GM12878 (cell line): ENCODE measurements at regions of chr21 and their contacts with region 1.

Region 1: GRCh38 chr21:44792702-44793591 is 8.7 kb downstream of the UBE2G2 start:
- DNase-seq: no peak
- ATAC-seq: peak; percentile 94
- H3K4me3 ChIP-seq: no peak overlapping the region; the same call in 1 of the 2 replicates
- H3K27ac ChIP-seq: peak overlapping the region; percentile 30; the same call in 1 of the 2 replicates
- H3K4me1 ChIP-seq: peaks cover 19% of the 10 kb centered on the region
- H3K27me3 ChIP-seq: no peaks in the 10 kb centered on the region
- CTCF ChIP-seq: peak; percentile 66 to 77 (median 68)
- EP300 ChIP-seq: no peak
- POLR2A ChIP-seq: no peak
- RAD21 ChIP-seq: peak; percentile 82

Region 2: DNA sequence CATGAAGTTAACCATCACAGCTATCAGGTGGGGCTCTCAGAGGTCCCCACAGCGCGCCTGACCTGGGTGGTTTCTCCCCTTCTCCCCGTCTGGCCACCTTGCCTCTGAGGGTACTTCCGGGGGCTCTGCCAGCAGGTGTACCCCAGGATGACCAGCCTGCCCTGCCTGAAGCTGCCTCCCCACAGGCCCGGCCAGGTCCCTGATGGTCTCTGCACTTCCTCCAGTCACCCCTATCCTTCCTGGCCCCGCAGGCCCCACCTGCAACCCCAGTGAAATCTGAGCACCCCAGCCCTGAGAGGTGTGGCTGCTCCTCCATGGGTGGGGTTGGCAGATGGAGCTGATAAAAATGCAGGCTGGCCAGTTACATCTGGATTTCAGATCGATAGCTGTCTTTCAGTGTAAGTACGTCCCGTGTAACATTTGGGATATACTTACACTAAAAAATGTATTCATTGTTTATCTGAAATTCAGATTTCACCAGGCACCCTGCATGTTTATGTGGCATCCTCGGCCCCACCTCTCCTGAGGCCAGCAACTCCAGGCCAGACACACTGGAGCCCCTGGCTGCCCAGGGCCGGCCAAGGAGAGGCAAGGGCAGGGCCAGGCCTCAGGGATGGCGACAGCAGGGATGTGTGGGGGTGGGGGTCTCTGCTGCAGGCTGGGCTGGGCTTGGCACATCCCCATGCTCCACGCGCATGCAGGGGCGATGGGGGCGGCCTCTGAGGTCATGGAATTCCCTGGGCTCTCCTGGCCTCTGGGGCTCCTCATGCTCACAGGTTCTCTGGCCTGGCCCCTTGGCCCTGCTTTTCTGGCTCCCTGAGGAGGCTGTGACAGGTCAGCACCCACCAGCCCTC is 312.5 kb before region 1 on chr21:
- CTCF ChIA-PET with region 1: interaction called, 14 read pairs
- POLR2A ChIA-PET with region 1: no interaction called
- RAD21 ChIA-PET with region 1: interaction called, 3 read pairs
- SMC1A ChIA-PET with region 1: interaction called, 3 read pairs
- in situ Hi-C with region 1: no loop called
- intact Hi-C with region 1: no loop called
- DNase-seq: no peak
- ATAC-seq: no peak
- H3K4me3 ChIP-seq: no peak overlapping the region
- H3K27ac ChIP-seq: no peak overlapping the region
- H3K4me1 ChIP-seq: no peaks in the 10 kb centered on the region
- H3K27me3 ChIP-seq: no peaks in the 10 kb centered on the region; a peak in 1 of 4 replicates
- CTCF ChIP-seq: no peak
- EP300 ChIP-seq: no peak
- POLR2A ChIP-seq: no peak
- RAD21 ChIP-seq: no peak

Region 3: GRCh38 chr21:44494956-44495355 is 298.0 kb before region 1 on chr21:
- CTCF ChIA-PET with region 1: no interaction called
- POLR2A ChIA-PET with region 1: no interaction called
- RAD21 ChIA-PET with region 1: no interaction called
- SMC1A ChIA-PET with region 1: no interaction called
- in situ Hi-C with region 1: no loop called
- intact Hi-C with region 1: no loop called
- DNase-seq: no peak
- ATAC-seq: no peak
- H3K4me3 ChIP-seq: no peak overlapping the region
- H3K27ac ChIP-seq: no peak overlapping the region
- H3K4me1 ChIP-seq: no peaks in the 10 kb centered on the region
- H3K27me3 ChIP-seq: no peaks in the 10 kb centered on the region; a peak in 1 of 4 replicates
- CTCF ChIP-seq: no peak
- EP300 ChIP-seq: no peak
- POLR2A ChIP-seq: no peak
- RAD21 ChIP-seq: no peak

Region 4: DNA sequence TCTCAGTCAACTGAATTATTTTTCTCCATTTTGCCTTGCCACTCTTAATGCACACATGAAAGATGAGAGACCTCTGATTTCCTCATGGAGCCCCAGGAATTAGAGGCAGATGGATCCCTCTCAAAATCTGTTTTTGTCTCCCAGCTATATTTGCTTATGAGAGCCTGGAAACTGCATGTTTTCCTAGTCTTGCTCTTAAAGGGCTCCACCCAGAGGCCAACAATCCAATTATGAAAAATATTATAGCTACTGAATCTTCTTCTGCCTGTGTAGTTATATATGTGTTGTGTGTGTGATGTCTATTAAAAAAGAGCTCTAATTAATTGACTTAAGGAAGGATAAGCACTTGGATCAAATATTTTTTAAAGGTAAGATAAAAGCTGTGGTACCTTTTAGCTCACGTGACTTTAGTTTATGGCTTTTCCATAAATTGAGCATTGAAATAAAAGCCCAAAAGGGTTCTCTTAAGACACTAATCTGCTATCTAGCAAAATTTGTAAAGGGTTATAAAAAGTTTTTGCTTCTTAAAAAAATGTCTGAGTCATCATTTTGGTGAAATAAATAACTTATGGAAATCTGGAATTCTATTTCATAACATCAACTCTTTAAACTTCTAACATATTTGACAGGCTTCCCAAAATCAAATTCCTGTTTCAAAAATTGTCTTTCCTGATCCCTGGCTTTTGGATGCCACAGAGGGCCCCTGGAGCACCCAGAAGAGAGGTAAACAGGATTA is 50.4 kb before region 1 on chr21:
- CTCF ChIA-PET with region 1: interaction called, 27 read pairs
- POLR2A ChIA-PET with region 1: no interaction called
- RAD21 ChIA-PET with region 1: interaction called, 15 read pairs
- SMC1A ChIA-PET with region 1: interaction called, 6 read pairs
- in situ Hi-C with region 1: no loop called
- intact Hi-C with region 1: no loop called
- DNase-seq: no peak
- ATAC-seq: no peak
- H3K4me3 ChIP-seq: no peak overlapping the region
- H3K27ac ChIP-seq: no peak overlapping the region
- H3K4me1 ChIP-seq: no peaks in the 10 kb centered on the region
- H3K27me3 ChIP-seq: no peaks in the 10 kb centered on the region
- CTCF ChIP-seq: peak in 2 of 3 experiments; percentile 23 to 26; a peak in 4 of 6 replicates
- EP300 ChIP-seq: no peak
- POLR2A ChIP-seq: no peak
- RAD21 ChIP-seq: peak; percentile 46

Region 5: DNA sequence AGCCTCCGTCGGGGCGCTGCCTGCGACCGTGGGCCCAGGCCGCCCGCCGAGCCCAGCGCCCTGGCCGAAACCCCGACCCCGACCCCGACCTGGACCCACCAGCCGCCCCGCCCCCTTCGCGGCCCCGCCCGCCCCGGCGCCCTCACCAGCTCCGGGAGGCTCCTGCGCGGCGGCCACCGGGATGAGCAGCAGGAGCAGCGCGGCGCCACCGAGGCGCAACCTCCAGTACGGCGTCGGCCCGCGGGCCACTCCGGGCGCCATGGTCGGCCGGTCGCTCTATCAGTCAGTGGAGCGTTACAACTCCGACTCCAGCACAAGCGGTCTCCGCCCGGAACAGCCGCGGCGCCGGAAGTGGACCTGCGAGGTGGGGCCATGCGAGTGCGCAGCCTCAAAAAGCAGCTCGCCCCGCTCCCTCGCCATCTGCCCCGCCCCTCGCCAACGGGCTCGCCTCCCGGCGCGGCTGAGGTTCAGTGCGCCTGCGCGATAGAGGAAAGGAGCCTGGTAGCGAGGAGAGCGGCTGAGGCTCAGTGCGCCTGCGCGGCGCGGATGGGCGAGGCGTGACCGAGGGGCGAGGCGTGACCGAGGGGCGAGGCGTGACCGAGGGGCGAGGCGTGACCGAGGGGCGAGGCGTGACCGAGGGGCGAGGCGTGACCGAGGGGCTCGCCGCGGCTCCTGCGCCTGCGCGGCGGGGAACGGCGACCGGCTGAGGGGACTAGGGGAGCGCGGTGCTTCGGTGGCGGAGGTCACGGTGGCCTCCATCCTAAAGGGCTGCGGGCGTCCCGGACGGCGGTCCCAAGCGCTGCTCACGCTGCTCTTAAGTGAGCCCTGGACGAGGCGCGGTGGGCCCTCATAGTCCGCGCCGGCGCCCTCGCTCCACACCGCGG is 80.7 kb after region 1 on chr21 and contains the start of gene PTTG1IP:
- CTCF ChIA-PET with region 1: interaction called, 67 read pairs
- POLR2A ChIA-PET with region 1: interaction called, 4 read pairs
- RAD21 ChIA-PET with region 1: interaction called, 6 read pairs
- SMC1A ChIA-PET with region 1: interaction called, 22 read pairs
- in situ Hi-C with region 1: no loop called
- intact Hi-C with region 1: no loop called
- DNase-seq: peak; percentile 94
- ATAC-seq: peak; percentile 84
- H3K4me3 ChIP-seq: peak within 1 kb of the TSS; percentile 92
- H3K27ac ChIP-seq: peak within 1 kb of the TSS; percentile 67
- H3K4me1 ChIP-seq: peaks cover 17% of the 10 kb centered on the region
- H3K27me3 ChIP-seq: no peaks in the 10 kb centered on the region
- CTCF ChIP-seq: no peak
- EP300 ChIP-seq: no peak
- POLR2A ChIP-seq: peak; percentile 87
- RAD21 ChIP-seq: no peak
- polyA plus RNA-seq, gene PTTG1IP: 2.4 to 10.4 TPM

Region 6: DNA sequence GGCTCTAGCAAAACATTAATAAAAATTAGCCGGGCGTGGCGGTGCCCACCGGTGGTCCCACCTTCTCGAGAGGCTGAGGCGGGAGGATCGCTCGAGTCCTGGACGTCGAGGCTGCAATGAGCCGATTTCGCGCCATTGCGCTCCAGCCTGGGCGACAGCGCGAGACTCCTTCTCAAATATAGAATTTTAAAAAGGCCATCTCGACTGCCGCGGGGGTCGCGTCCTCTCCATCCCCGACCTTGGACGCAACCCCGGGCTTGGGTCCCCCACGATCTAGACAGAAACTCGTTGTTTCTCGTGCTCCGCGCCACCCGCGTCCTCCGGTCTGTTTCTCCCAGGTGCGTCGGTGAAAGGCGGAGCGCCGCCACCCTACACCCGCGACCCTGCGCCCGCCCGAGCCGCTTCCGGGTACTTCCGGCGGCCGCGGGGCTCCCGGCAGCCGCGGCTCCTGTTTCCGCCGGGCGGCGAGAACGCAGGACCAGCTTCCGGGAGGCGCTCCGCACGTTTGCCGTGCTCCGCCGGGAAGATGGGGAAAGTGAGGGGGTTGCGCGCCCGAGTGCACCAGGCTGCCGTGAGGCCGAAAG is 146.7 kb after region 1 on chr21 and contains the start of gene SLX9:
- CTCF ChIA-PET with region 1: interaction called, 44 read pairs
- POLR2A ChIA-PET with region 1: no interaction called
- RAD21 ChIA-PET with region 1: interaction called, 3 read pairs
- SMC1A ChIA-PET with region 1: interaction called, 5 read pairs
- in situ Hi-C with region 1: loop called (anchors 5 kb)
- intact Hi-C with region 1: no loop called
- DNase-seq: no peak
- ATAC-seq: peak; percentile 92
- H3K4me3 ChIP-seq: peak within 1 kb of the TSS; percentile 92
- H3K27ac ChIP-seq: peak within 1 kb of the TSS; percentile 50
- H3K4me1 ChIP-seq: peaks cover 18% of the 10 kb centered on the region
- H3K27me3 ChIP-seq: no peaks in the 10 kb centered on the region
- CTCF ChIP-seq: no peak
- EP300 ChIP-seq: no peak
- POLR2A ChIP-seq: peak; percentile 88
- RAD21 ChIP-seq: no peak
- polyA plus RNA-seq, gene SLX9: 0.69 to 5.5 TPM